Posterior cingulate gyrus (tissue), 11 donors: ENCODE measurements at regions of chr20 and their contacts with region 1.

Region 1: GRCh38 chr20:13119583-13119982 is 101.5 kb upstream of the ISM1 start:
- DNase-seq: peak in 4 of 10 donors; percentile 10 to 89 (median 19)

Region 2: GRCh38 chr20:12916699-12917098 is 202.9 kb before region 1 on chr20:
- intact Hi-C with region 1: no loop called
- DNase-seq: no peak

Region 3: DNA sequence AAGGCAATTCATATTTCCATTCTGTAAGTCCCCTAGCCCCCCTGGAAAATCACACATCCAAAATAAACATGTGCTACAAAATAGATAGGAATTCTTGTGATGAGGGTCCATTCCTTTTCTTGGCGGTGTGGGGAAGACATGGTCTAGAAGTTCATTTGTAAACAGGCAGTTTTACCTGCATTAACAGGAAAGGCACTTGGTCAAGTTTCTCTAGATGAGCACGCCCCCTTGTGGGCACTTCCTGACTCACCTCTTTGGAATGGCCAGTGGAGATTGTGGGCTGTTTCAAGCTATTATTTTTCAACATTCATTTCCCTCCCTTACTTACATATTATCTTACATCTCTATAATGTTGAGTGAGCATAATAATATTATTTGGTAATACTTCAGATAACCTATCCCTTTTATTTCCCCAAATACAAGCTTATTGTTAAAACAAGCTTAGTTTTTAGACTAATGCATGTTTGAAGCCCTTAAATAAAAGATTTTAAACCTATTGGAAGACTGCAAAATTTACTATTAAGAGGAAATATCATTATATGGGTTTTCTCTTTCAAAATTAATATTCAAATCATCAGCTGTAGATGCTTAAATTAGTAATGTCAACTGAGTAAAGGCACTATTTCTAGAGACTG is 427.0 kb after region 1 on chr20:
- intact Hi-C with region 1: loop called (anchors 1 kb)
- DNase-seq: peak in 9 of 10 donors; percentile 21 to 93 (median 68)

Region 4: DNA sequence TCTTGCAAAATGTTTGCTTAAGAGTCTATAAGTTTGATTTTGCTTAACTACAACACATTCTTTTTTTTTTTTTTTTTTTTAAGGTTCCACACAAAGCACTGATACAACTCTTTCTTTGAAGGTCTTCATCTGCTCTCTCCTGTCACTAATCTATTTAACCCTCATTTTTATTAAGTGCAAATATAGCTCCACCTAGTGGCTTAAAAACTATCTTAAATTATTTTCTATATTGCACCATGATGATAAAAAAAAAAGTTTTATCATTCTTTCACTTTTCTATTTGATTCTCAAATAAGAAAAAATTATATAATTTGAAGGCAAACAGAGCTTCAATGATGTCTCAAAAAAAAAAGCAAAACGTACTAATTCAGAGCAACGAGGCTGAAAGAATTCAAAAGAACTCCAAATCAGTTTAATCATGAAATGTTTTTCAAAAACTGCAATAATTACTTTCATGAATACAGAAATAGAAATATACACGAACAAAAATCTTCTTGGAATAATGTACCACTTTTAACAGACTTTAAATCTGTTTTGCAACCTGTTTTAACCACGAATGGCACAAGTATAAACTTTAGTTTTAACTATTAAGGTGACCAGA is 652.4 kb after region 1 on chr20:
- intact Hi-C with region 1: loop called (anchors 5 kb)
- DNase-seq: no peak

Region 5: GRCh38 chr20:14055127-14055742 is 935.7 kb after region 1 on chr20:
- intact Hi-C with region 1: loop called (anchors 5 kb)
- DNase-seq: no peak